Common myeloid progenitor, CD34-positive (primary cell): ENCODE measurements at regions of chr17 and their contacts with region 1.

Region 1: DNA sequence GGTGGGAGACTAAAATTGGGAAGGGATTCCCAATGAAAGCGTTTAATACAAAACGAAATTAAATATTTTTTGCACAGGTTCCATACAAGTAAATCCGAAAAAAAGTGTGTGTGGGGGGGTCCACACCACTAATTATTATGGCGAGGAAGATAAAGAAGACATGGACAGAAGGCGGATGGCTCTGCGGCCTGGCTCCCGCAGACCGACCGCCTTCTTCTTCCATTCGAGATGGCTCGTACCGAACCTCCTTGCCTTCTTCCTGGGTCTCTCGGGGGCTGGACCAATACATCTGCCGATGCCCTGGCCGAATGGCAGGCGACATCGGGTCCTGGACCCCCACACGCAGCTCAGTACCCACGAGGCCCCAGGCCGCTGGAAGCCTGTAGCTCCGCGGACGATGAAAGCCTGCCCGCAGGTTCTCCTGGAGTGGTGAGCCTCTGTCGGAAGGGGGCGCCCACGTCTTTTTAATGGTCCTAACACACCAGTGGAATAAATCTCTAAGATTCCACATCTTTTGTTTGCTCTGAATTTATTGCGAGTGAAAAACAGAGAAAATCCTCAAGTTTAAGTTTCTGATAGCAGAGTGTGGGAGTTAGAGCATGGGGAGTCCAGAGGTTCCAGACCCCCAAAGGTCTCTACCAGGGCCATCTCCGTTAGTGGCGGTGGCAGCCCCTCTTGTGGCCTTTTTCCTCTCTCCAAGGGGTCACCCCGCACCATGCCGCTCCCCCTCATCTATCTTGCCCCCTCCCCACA is 1.4 kb downstream of the PRAC2 start:
- DNase-seq: peak; percentile 80 to 89 (median 86)
- H3K4me3 ChIP-seq: no peak overlapping the region
- H3K27ac ChIP-seq: no peak overlapping the region
- H3K4me1 ChIP-seq: peaks cover 0 to 22% (median 8%) of the 10 kb centered on the region in 4 experiments
- H3K27me3 ChIP-seq: peaks cover 18 to 100% (median 79%) of the 10 kb centered on the region in 5 experiments

Region 2: DNA sequence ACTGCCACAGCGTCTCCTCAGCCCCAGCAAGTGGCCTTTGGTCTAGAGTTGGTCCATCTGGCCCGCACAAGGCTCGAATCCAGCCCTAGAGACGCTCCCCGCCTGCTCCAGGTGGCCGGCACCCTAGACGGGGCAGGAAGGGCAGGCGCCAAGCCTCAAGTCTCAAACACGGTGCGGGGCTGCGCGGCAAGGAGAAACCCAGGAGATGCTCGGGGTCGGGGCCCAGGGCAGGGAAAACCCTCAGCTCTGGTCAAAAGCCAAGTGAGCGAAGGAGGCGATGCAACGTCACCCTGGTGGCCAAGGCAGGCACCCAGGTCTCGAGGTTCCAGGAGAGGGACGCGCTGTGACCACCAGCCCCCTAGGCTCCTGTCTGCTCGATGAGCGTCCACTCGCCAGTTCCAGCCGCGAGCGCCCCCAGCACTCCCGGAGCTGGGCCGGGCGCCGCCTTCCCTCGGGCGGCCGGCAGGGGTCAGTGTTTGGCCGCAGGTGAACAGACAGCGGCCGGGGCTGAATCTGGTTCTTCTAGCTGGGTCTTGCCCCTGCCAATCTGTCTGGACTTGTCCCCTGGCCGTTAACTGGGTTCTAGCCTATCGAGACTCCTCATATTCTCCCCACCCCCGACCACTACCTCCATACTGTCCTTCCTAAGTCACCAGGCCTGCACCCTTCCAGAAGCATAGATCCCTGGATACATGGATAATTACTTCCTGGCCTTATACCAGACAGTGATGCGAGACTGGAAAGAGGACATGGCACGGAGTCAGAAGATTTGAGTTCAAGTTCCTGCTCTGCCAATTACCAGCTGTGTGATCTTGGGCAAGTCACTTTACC is 46.1 kb before region 1 on chr17:
- CTCF ChIA-PET with region 1: interaction called, 18 read pairs
- POLR2A ChIA-PET with region 1: no interaction called
- DNase-seq: peak; percentile 51 to 70 (median 65)
- H3K4me3 ChIP-seq: peak overlapping the region in 3 of 7 experiments; percentile 26 to 63 (median 30)
- H3K27ac ChIP-seq: no peak overlapping the region
- H3K4me1 ChIP-seq: peaks cover 0 to 4% (median 0%) of the 10 kb centered on the region in 4 experiments
- H3K27me3 ChIP-seq: peaks cover 3 to 62% (median 21%) of the 10 kb centered on the region in 5 experiments

Region 3: GRCh38 chr17:48751172-48751571 is 26.7 kb after region 1 on chr17:
- CTCF ChIA-PET with region 1: interaction called, 15 read pairs
- POLR2A ChIA-PET with region 1: no interaction called
- DNase-seq: no peak
- H3K4me3 ChIP-seq: no peak overlapping the region
- H3K27ac ChIP-seq: no peak overlapping the region
- H3K4me1 ChIP-seq: peaks cover 0 to 13% (median 10%) of the 10 kb centered on the region in 4 experiments
- H3K27me3 ChIP-seq: peaks cover 52 to 100% (median 73%) of the 10 kb centered on the region in 5 experiments

Region 4: GRCh38 chr17:48804925-48805411 is 80.5 kb after region 1 on chr17:
- CTCF ChIA-PET with region 1: interaction called, 17 read pairs
- POLR2A ChIA-PET with region 1: no interaction called
- DNase-seq: peak; percentile 47 to 69 (median 59)
- H3K4me3 ChIP-seq: no peak overlapping the region
- H3K27ac ChIP-seq: no peak overlapping the region
- H3K4me1 ChIP-seq: peaks cover 0 to 8% (median 5%) of the 10 kb centered on the region in 4 experiments
- H3K27me3 ChIP-seq: peaks cover 0 to 18% (median 1%) of the 10 kb centered on the region in 5 experiments

Region 5: DNA sequence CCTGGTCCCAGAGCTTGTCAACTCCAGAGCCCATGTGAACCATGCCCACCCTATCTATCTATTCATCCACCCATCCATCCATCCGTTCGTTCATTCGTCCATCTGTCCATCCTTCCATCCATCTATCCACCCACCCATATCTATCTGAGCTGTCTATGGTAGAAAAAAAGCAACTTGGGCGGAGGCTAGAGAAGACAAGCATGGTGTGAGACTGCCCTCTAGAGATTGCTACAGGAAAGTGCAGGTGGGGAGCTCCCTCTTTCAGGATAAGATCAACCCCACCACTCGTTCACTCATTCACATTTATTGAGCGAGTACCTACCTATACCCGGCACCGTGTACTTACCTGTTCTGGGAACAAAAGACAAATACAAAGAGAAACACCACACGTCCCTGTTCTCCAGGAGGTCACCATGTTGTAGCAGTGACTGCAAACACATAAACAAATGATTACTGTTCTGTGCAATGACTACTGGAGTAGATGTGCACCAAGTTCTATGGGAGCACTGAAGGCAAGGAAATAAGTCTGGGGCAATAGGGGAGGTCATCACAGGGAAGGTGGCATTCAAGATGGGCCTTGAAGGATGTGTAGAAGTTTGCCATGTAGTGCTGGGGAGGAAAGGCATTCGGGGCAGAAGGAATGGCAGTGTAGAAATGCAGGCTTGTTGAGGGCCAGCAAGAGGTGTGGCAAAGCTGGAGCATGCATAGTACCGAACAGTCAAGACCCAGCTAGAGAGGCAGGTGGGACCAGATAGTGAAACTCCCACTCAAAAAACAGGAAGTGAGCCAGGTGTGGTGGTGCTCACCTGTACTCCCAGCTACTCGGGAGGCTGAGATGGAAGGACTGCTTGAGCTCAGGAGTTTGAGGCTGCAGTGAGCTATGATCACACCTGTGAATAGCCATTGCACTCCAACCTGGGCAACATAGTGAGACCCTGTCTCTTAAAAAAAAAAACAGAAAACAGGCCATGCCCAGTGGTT is 154.8 kb after region 1 on chr17:
- CTCF ChIA-PET with region 1: interaction called, 52 read pairs
- POLR2A ChIA-PET with region 1: interaction called, 4 read pairs
- DNase-seq: peak; percentile 76 to 90 (median 81)
- H3K4me3 ChIP-seq: no peak overlapping the region
- H3K27ac ChIP-seq: no peak overlapping the region
- H3K4me1 ChIP-seq: peaks cover 0 to 3% (median 2%) of the 10 kb centered on the region in 4 experiments
- H3K27me3 ChIP-seq: peaks cover 0 to 1% (median 0%) of the 10 kb centered on the region in 5 experiments